ENCODE measurements at regions of chr20 and their contacts with region 1.

Region 1: GRCh38 chr20:50713657-50714101 is 17.7 kb upstream of the PARD6B start:
- DNase-seq: peak in 1 of 5 donors; percentile 22
- ATAC-seq: peak in 3 of 4 donors; percentile 57 to 65 (median 64)
- H3K4me3 ChIP-seq: no peak overlapping the region
- H3K27ac ChIP-seq: no peak overlapping the region
- H3K4me1 ChIP-seq: peaks cover 0 to 7% (median 0%) of the 10 kb centered on the region in 12 donors
- H3K27me3 ChIP-seq: no peaks in the 10 kb centered on the region
- CTCF ChIP-seq: peak; percentile 20 to 61 (median 45)
- POLR2A ChIP-seq: no peak

Region 2: DNA sequence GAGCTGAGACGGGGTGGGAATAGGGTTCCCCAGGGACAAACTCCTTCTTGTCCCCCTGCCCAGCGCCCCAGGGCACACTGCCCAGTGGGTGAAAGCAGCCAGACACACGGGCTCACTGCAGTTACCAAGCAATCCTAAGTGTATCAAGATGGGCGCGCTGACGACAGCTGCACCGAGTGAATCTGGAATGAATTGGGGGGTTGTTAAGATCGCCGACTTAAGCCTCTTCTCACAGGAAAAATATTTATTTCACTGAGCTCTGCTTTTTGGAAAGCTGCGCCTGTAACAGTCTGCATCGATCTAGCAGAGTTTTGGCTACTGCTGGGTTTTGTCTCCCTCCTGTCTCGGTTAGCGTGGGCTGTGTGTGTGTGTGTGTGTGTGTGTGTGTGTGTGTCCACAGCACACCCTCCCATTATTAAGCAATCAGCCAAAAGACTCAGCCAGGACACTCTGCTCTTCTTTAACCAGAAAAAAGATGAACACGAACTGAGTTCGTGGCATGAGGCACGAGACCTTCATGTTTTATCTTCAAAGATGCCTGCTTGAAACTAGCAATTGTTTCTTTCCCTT is 58.3 kb before region 1 on chr20:
- intact Hi-C with region 1: loop called in 4 of 10 experiments (anchors 5 to 10 kb)
- DNase-seq: peak; percentile 68 to 85 (median 79)
- ATAC-seq: peak; percentile 68 to 84 (median 78)
- H3K4me3 ChIP-seq: peak overlapping the region in 7 of 12 donors; percentile 6 to 33 (median 14)
- H3K27ac ChIP-seq: peak overlapping the region; percentile 54 to 86 (median 76)
- H3K4me1 ChIP-seq: peaks cover 3 to 52% (median 31%) of the 10 kb centered on the region in 12 donors
- H3K27me3 ChIP-seq: no peaks in the 10 kb centered on the region
- CTCF ChIP-seq: no peak
- POLR2A ChIP-seq: peak in 1 of 2 donors; percentile 17

Region 3: GRCh38 chr20:50663095-50663850 is 50.4 kb before region 1 on chr20:
- intact Hi-C with region 1: loop called in 4 of 10 experiments (anchors 5 to 10 kb)
- DNase-seq: peak in 1 of 5 donors; percentile 35
- ATAC-seq: peak in 3 of 4 donors; percentile 30 to 50 (median 44)
- H3K4me3 ChIP-seq: no peak overlapping the region
- H3K27ac ChIP-seq: peak overlapping the region in 11 of 12 donors; percentile 59 to 87 (median 71)
- H3K4me1 ChIP-seq: peaks cover 5 to 55% (median 39%) of the 10 kb centered on the region in 12 donors
- H3K27me3 ChIP-seq: no peaks in the 10 kb centered on the region
- CTCF ChIP-seq: peak in 8 of 12 donors; percentile 7 to 39 (median 20)
- POLR2A ChIP-seq: no peak